Right cardiac atrium (tissue), 5 donors: ENCODE measurements at regions of chr20 and their contacts with region 1.

Region 1: GRCh38 chr20:4171538-4172116 is 156.3 kb upstream of the RNF24 start:
- DNase-seq: no peak
- ATAC-seq: peak; percentile 14 to 16
- H3K4me3 ChIP-seq: peak overlapping the region; percentile 29
- H3K27ac ChIP-seq: peak overlapping the region; percentile 34
- H3K4me1 ChIP-seq: peaks cover 7% of the 10 kb centered on the region
- H3K27me3 ChIP-seq: no peaks in the 10 kb centered on the region

Region 2: GRCh38 chr20:3980260-3981131 is 191.1 kb before region 1 on chr20:
- intact Hi-C with region 1: no loop called
- DNase-seq: peak in 1 of 3 donors; percentile 46
- ATAC-seq: peak; percentile 73 to 75
- H3K4me3 ChIP-seq: peak overlapping the region; percentile 47
- H3K27ac ChIP-seq: peak overlapping the region; percentile 86
- H3K4me1 ChIP-seq: peaks cover 1% of the 10 kb centered on the region
- H3K27me3 ChIP-seq: no peaks in the 10 kb centered on the region

Region 3: GRCh38 chr20:4108495-4109306 is 62.9 kb before region 1 on chr20:
- intact Hi-C with region 1: loop called in 1 of 4 experiments (anchors 2 kb)
- DNase-seq: peak in 2 of 3 donors; percentile 67 to 77
- ATAC-seq: peak; percentile 83 to 85
- H3K4me3 ChIP-seq: no peak overlapping the region
- H3K27ac ChIP-seq: no peak overlapping the region
- H3K4me1 ChIP-seq: peaks cover 6% of the 10 kb centered on the region
- H3K27me3 ChIP-seq: no peaks in the 10 kb centered on the region

Region 4: DNA sequence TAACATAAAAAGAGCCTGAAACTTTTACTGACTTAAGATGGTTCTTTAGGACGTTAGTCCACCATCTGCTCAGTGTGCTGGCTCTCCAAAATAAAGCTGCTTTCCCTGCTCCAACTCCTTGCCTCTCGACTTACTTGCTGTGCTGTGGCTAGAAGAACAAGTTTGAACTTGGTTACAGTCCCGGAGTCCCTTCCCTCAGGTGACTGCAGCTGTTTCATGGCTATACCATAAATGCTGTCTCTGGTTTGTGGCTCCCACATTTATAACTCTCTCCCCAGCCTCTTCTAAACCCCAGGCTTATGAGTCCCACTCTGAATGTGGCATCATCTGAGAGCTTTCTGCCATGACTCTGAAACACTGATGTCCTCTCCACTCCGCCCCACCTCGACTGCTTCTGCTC is 243.7 kb after region 1 on chr20:
- intact Hi-C with region 1: no loop called
- DNase-seq: no peak
- ATAC-seq: no peak
- H3K4me3 ChIP-seq: no peak overlapping the region
- H3K27ac ChIP-seq: no peak overlapping the region
- H3K4me1 ChIP-seq: no peaks in the 10 kb centered on the region
- H3K27me3 ChIP-seq: no peaks in the 10 kb centered on the region